Right cardiac atrium (tissue), 5 donors: ENCODE measurements at regions of chr10 and their contacts with region 1.

Region 1: GRCh38 chr10:91163269-91163868 is 57.1 kb upstream of the PCGF5 start:
- DNase-seq: peak; percentile 79 to 89 (median 88)
- ATAC-seq: peak; percentile 60 to 72
- H3K4me3 ChIP-seq: peak overlapping the region; percentile 99
- H3K27ac ChIP-seq: peak overlapping the region; percentile 85
- H3K4me1 ChIP-seq: peaks cover 4% of the 10 kb centered on the region
- H3K27me3 ChIP-seq: no peaks in the 10 kb centered on the region

Region 2: DNA sequence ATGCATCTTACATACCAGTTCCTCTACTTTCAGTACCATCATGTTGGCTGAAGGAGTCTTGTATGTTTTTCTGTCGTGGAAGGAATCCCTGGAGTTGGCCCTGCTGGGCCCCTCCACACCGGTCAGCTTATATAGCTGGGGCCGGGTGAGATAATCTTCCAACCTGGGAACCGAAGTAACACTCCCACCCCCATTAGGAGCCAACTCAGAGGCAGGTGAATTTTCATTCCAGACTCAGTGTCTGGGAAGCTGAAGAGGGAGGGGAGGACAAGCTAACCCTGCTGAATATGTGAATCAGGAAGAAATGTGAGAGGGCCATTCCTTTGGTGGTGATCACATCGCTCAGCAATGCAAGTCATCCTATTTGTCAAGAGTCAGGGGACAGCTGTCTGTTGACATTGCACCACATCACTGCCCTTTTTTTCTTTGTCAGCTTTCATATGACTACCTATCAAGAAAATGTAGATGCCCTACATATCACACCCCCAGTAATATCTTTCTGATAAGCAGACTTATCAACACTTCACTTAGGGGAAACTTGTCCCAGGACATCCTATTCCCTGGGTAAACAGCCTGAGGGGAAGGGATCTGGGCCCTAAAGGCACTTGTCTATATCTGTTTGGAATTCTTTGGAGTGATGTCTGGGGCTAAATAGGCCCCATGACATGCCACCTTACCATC is 242.2 kb before region 1 on chr10 and contains the start of gene ANKRD1:
- intact Hi-C with region 1: no loop called
- DNase-seq: peak in 2 of 3 donors; percentile 67 to 68
- ATAC-seq: peak; percentile 90 to 91
- H3K4me3 ChIP-seq: peak within 1 kb of the TSS; percentile 36
- H3K27ac ChIP-seq: peak within 1 kb of the TSS; percentile 95
- H3K4me1 ChIP-seq: peaks cover 9% of the 10 kb centered on the region
- H3K27me3 ChIP-seq: no peaks in the 10 kb centered on the region
- total RNA-seq, gene ANKRD1: 1,154 to 3,897 (median 2,224) TPM

Region 3: DNA sequence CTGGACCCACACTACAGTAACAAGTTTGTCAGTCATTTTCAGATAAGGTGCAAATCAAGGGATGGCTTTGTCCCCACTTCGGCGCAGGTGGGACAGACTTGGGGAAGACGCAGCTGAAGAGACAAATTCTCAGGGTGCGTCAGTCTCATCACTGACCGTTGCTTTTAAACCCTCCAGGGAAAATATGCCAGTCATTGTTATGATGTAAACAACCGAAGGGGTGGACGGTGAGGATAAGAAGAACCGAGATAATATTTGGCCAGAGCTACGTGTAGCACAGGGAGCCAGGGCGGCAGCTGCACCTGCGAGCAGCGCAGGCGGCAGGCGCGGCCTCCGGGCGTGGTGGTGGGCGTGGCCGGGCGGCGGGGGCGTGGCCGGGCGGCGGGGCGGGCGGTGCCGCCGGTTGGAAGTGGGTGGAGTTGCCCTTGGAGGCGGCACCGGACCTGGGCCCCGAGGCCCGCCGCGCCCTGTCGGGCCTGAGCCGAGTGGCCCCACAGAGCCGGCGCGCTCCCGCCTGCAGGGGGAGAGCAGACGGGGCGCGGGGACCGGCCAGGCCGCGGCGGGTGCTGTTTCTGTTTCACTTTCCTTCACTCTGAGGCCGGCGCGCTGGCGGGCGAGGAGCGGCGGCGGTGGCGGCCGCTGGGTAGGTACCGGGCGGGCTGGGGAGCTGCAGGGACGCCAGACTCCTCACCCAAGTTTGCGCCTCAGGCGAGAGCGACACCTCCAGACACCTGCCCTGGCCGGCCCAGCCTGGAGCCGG is 57.0 kb after region 1 on chr10 and contains the start of gene PCGF5:
- intact Hi-C with region 1: loop called in 1 of 4 experiments (anchors 5 kb)
- DNase-seq: peak; percentile 93 to 97 (median 96)
- ATAC-seq: peak; percentile 100
- H3K4me3 ChIP-seq: peak within 1 kb of the TSS; percentile 96
- H3K27ac ChIP-seq: peak within 1 kb of the TSS; percentile 79
- H3K4me1 ChIP-seq: peaks cover 2% of the 10 kb centered on the region
- H3K27me3 ChIP-seq: no peaks in the 10 kb centered on the region
- total RNA-seq, gene PCGF5: 55.1 to 77.1 (median 59.6) TPM